Caco-2 (cell line): ENCODE measurements at regions of chr1 and their contacts with region 1.

Region 1: GRCh38 chr1:150515328-150516048 is at the start of gene FALEC:
- DNase-seq: peak; percentile 97 to 98
- H3K4me3 ChIP-seq: peak within 1 kb of the TSS; percentile 77
- H3K4me3 Mint-ChIP-seq: peak within 1 kb of the TSS; percentile 88
- H3K27ac Mint-ChIP-seq: peak within 1 kb of the TSS; percentile 86
- H3K4me1 ChIP-seq: peaks cover 7% of the 10 kb centered on the region; the same call in 1 of the 2 replicates
- H3K4me1 Mint-ChIP-seq: peaks cover 9% of the 10 kb centered on the region
- H3K27me3 ChIP-seq: no peaks in the 10 kb centered on the region
- H3K27me3 Mint-ChIP-seq: no peaks in the 10 kb centered on the region
- CTCF ChIP-seq: no peak
- total RNA-seq, gene FALEC: 0.59 and 0.63 TPM in 2 replicates

Region 2: DNA sequence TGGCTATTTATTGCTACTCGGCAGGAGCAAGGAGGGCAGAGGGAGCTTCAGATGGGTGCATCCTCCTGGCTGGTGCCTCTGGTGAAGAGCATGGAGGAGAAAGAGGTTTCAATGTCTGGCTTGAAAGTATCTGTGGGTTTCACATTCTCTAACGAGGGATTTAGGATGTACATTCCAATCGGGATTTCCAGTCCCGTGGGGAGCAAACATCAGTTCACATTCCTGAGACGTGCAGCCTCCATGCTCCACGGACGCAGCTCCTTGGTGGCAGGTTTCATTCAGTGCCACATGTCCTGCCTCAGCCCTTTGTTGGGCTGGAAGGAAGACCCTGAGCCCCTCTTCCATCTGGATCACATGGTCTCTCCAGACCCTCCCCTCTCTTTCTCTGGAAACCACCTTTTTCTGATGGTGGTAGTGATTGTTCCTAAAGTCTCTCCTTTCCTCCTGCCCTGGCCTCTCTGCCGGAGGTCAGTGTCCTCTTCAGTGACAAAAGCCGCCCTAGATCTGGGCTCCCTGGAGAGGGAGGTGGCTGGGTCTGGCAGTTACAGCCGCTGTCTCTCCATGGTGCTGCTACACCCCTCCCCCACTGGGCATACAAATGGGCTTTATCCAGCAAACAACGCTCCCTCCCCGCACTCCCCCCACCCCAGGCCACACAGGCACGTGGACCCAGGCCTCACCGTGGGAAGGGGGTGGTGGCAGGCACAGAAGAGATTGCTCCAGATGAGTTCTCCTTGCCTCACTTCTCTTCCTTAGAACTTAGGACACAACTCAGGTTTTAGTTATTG is 258.7 kb before region 1 on chr1:
- CTCF ChIA-PET with region 1: interaction called, 8 read pairs
- POLR2A ChIA-PET with region 1: no interaction called
- intact Hi-C with region 1: loop called (anchors 2 kb)
- DNase-seq: no peak
- H3K4me3 ChIP-seq: no peak overlapping the region
- H3K4me3 Mint-ChIP-seq: peak overlapping the region; percentile 37
- H3K27ac Mint-ChIP-seq: peak overlapping the region; percentile 11
- H3K4me1 ChIP-seq: peaks cover 24% of the 10 kb centered on the region
- H3K4me1 Mint-ChIP-seq: peaks cover 29% of the 10 kb centered on the region
- H3K27me3 ChIP-seq: no peaks in the 10 kb centered on the region
- H3K27me3 Mint-ChIP-seq: peaks cover 2% of the 10 kb centered on the region
- CTCF ChIP-seq: no peak

Region 3: DNA sequence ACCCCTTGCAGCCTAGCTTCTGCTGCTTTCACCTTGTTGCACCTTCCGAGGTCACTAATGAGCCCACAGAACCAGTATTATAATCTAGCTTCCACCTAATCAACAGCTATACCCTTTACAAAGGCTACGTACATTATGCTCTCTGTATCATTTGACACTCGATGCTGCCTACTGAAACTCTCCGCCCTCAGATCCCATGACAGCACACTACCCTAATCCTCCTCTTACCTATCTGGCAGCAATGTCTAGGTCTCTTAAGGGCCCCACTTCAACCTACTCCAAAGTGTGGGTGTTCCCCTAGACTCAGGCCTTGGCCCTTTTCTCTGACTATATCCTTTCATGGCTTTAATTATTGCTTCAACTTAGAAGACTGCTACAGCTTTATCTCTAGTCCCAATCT is 226.7 kb before region 1 on chr1:
- CTCF ChIA-PET with region 1: no interaction called
- POLR2A ChIA-PET with region 1: no interaction called
- intact Hi-C with region 1: no loop called
- DNase-seq: no peak
- H3K4me3 ChIP-seq: no peak overlapping the region
- H3K4me3 Mint-ChIP-seq: no peak overlapping the region
- H3K27ac Mint-ChIP-seq: no peak overlapping the region
- H3K4me1 ChIP-seq: no peaks in the 10 kb centered on the region
- H3K4me1 Mint-ChIP-seq: no peaks in the 10 kb centered on the region
- H3K27me3 ChIP-seq: no peaks in the 10 kb centered on the region
- H3K27me3 Mint-ChIP-seq: no peaks in the 10 kb centered on the region
- CTCF ChIP-seq: no peak

Region 4: DNA sequence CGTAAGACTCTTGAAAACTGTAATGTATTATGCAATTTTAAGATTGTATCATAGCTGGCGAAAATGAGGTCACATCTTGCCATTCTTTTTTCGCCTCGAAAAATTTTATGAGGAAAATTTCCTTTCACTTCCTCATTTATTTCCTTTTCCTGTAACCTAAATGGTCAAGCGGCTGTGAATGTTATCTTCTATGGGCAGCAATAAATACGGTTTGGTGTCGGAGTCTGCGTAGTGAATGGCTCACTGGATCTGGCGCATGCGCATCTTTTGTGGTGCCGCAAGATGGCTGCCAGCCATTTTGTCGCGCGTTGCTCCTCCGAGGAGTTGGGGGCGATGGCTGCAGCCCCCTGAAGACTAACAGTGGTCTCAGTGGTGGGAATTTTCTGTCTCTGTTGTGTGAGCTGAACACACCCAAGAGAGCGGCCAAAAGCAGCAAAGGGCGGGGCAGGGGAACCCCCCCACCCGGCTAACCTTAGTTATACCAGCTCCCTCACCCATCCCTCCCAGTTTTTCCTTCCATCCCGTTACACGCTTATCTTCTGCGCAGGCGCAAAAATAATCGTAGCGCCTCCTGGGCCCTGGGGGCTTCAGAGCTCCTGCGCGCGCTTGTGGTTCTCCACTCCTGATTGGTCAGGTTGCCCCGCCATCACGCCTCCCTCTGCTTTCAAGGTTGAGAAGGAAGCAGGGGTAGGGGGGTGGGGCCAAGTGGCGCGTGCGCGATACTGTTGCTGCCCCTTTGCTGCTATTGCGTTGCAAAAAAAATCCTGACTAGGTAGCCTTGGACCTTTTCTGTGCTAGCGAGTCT is 151.9 kb before region 1 on chr1 and contains the start of gene RPRD2:
- CTCF ChIA-PET with region 1: no interaction called
- POLR2A ChIA-PET with region 1: no interaction called
- intact Hi-C with region 1: loop called (anchors 1 kb)
- DNase-seq: peak; percentile 99 to 100
- H3K4me3 ChIP-seq: peak within 1 kb of the TSS; percentile 62
- H3K4me3 Mint-ChIP-seq: peak within 1 kb of the TSS; percentile 85
- H3K27ac Mint-ChIP-seq: peak within 1 kb of the TSS; percentile 94
- H3K4me1 ChIP-seq: peaks cover 7% of the 10 kb centered on the region; the same call in 1 of the 2 replicates
- H3K4me1 Mint-ChIP-seq: peaks cover 13% of the 10 kb centered on the region
- H3K27me3 ChIP-seq: no peaks in the 10 kb centered on the region
- H3K27me3 Mint-ChIP-seq: no peaks in the 10 kb centered on the region
- CTCF ChIP-seq: no peak
- total RNA-seq, gene RPRD2: 24.3 and 25.0 TPM in 2 replicates

Region 5: GRCh38 chr1:150464422-150464826 is 51.1 kb before region 1 on chr1:
- CTCF ChIA-PET with region 1: interaction called, 3 read pairs
- POLR2A ChIA-PET with region 1: no interaction called
- intact Hi-C with region 1: loop called (anchors 1 kb)
- DNase-seq: peak; percentile 67 to 78
- H3K4me3 ChIP-seq: no peak overlapping the region
- H3K4me3 Mint-ChIP-seq: no peak overlapping the region
- H3K27ac Mint-ChIP-seq: no peak overlapping the region
- H3K4me1 ChIP-seq: no peaks in the 10 kb centered on the region
- H3K4me1 Mint-ChIP-seq: no peaks in the 10 kb centered on the region
- H3K27me3 ChIP-seq: no peaks in the 10 kb centered on the region
- H3K27me3 Mint-ChIP-seq: no peaks in the 10 kb centered on the region
- CTCF ChIP-seq: peak; percentile 71 to 79

Region 6: DNA sequence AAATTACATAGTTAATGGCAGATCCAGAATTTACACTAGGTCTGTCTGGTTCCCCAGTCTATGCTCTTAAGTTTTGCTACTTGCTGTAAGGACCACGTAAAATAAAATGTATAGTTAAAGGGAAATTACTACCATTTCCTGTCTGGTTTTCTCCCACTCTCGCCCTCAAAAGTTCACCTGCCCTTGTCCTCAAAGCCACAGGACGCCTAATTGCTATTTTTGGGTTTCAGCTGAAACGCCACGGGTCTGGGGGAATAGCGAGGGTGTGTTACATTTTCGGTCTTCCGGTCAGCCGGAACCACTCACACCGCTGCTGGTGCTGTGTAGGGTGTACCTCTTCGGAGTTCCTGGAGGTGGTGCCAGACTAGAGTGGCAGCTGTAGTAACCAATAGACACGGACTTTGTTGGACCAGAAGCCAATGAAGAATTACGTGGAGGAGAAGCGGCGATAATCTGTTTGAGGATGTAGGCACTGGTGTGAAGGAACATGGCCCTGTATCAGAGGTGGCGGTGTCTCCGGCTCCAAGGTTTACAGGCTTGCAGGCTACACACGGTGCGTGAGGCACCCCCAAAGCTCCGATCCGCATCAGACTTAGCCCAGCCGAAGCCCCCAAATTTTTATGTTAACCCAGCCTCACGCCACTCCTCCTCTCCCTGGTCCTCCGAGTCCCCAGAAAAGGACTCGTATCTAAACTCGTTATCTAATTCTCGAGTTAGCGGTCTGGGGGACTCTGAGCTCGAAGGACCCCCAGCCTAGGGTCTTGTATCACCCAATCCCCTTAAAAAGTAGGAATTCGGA is 28.3 kb before region 1 on chr1 and contains the start of gene TARS2:
- CTCF ChIA-PET with region 1: no interaction called
- POLR2A ChIA-PET with region 1: interaction called, 4 read pairs
- intact Hi-C with region 1: loop called (anchors 1 kb)
- DNase-seq: peak; percentile 97 to 99
- H3K4me3 ChIP-seq: peak within 1 kb of the TSS; percentile 78
- H3K4me3 Mint-ChIP-seq: peak within 1 kb of the TSS; percentile 80
- H3K27ac Mint-ChIP-seq: peak within 1 kb of the TSS; percentile 85
- H3K4me1 ChIP-seq: no peaks in the 10 kb centered on the region
- H3K4me1 Mint-ChIP-seq: peaks cover 8% of the 10 kb centered on the region
- H3K27me3 ChIP-seq: no peaks in the 10 kb centered on the region
- H3K27me3 Mint-ChIP-seq: no peaks in the 10 kb centered on the region
- CTCF ChIP-seq: peak in 1 of 2 experiments; percentile 35
- total RNA-seq, gene TARS2: 26.8 and 30.6 TPM in 2 replicates

Region 7: GRCh38 chr1:150532868-150533302 is 17.4 kb after region 1 on chr1:
- CTCF ChIA-PET with region 1: interaction called, 38 read pairs
- POLR2A ChIA-PET with region 1: interaction called, 14 read pairs
- intact Hi-C with region 1: loop called (anchors 1 kb)
- DNase-seq: no peak
- H3K4me3 ChIP-seq: no peak overlapping the region
- H3K4me3 Mint-ChIP-seq: peak overlapping the region; percentile 66
- H3K27ac Mint-ChIP-seq: peak overlapping the region; percentile 91
- H3K4me1 ChIP-seq: peaks cover 55% of the 10 kb centered on the region
- H3K4me1 Mint-ChIP-seq: peaks cover 45% of the 10 kb centered on the region
- H3K27me3 ChIP-seq: no peaks in the 10 kb centered on the region
- H3K27me3 Mint-ChIP-seq: no peaks in the 10 kb centered on the region
- CTCF ChIP-seq: no peak